KBM-7 (cell line): ENCODE measurements at regions of chr18 and their contacts with region 1.

Region 1: GRCh38 chr18:9961041-9961440 is 47.2 kb downstream of the VAPA start:
- DNase-seq: no peak

Region 2: GRCh38 chr18:10519999-10520935 is 559.2 kb after region 1 on chr18:
- in situ Hi-C with region 1: loop called (anchors 10 kb)
- DNase-seq: peak; percentile 79